ENCODE measurements at regions of chr1 and their contacts with region 1.

Region 1: GRCh38 chr1:228139944-228140656 is at the start of gene GUK1:
- DNase-seq: peak; percentile 100
- ATAC-seq: peak; percentile 95
- H3K4me3 Mint-ChIP-seq: peak within 1 kb of the TSS; percentile 99
- H3K27ac Mint-ChIP-seq: peak within 1 kb of the TSS; percentile 99
- H3K4me1 Mint-ChIP-seq: peaks cover 42% of the 10 kb centered on the region
- H3K27me3 Mint-ChIP-seq: no peaks in the 10 kb centered on the region
- CTCF ChIP-seq: no peak
- total RNA-seq, gene GUK1: 375 to 376 TPM

Region 2: DNA sequence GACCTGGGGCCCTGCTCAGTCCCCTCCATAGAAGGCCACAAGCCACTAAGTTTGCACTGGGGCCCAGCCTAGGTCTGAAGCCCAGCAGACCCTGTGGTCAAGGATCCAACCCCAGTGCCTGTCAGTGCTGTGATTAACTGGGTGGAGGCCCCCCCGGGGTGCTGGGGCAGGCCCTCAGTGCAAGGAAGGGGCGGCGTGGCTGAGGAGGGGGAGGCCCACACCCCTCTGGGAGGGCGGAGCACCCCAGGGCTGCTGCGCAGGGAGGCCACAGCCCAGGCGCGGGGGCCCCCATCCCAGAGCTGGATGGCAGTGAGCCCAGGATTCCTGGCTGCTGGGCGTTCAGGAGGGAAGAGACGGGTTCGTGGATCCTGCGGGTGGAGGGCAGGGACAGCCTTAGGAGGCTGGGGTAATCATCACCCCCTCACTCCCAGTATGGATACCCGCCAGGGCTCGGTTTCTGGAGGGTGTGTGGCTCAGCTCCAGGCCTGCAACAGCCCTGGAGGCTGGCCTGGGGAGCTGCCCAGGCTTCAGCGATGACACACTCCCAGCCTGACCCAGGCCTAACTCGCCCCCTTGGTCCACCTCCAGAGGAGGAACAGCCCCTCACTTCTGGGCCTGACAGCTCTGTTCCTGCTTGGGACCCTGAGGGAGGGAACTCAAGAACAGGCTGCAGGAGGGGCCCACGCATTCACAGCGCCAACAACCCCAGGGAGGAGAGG is 10.5 kb after region 1 on chr1:
- CTCF ChIA-PET with region 1: interaction called, 3 read pairs
- POLR2A ChIA-PET with region 1: interaction called, 16 read pairs
- intact Hi-C with region 1: no loop called
- DNase-seq: peak; percentile 2
- ATAC-seq: no peak
- H3K4me3 Mint-ChIP-seq: no peak overlapping the region
- H3K27ac Mint-ChIP-seq: no peak overlapping the region
- H3K4me1 Mint-ChIP-seq: peaks cover 19% of the 10 kb centered on the region
- H3K27me3 Mint-ChIP-seq: no peaks in the 10 kb centered on the region
- CTCF ChIP-seq: no peak

Region 3: DNA sequence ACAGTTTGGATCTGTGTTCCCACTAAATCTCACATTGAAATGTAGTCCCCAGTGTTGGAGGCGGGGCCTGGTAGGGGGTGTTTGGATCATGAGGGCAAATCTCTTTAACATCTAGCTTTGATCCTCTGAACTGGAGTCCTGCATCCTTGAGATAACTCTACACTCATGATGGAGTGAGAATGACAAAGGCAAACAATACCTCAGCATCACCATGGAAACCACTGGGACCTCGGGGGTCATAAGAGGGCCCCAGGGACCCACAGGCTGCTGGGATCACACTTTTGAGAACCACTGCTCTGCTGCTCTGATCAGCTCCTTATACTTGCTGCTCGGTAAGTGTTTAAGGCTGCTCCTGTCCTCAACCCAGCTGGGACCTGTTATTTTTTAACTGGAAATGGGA is 54.3 kb after region 1 on chr1:
- CTCF ChIA-PET with region 1: no interaction called
- POLR2A ChIA-PET with region 1: no interaction called
- intact Hi-C with region 1: no loop called
- DNase-seq: no peak
- ATAC-seq: no peak
- H3K4me3 Mint-ChIP-seq: no peak overlapping the region
- H3K27ac Mint-ChIP-seq: no peak overlapping the region
- H3K4me1 Mint-ChIP-seq: no peaks in the 10 kb centered on the region
- H3K27me3 Mint-ChIP-seq: no peaks in the 10 kb centered on the region
- CTCF ChIP-seq: no peak

Region 4: DNA sequence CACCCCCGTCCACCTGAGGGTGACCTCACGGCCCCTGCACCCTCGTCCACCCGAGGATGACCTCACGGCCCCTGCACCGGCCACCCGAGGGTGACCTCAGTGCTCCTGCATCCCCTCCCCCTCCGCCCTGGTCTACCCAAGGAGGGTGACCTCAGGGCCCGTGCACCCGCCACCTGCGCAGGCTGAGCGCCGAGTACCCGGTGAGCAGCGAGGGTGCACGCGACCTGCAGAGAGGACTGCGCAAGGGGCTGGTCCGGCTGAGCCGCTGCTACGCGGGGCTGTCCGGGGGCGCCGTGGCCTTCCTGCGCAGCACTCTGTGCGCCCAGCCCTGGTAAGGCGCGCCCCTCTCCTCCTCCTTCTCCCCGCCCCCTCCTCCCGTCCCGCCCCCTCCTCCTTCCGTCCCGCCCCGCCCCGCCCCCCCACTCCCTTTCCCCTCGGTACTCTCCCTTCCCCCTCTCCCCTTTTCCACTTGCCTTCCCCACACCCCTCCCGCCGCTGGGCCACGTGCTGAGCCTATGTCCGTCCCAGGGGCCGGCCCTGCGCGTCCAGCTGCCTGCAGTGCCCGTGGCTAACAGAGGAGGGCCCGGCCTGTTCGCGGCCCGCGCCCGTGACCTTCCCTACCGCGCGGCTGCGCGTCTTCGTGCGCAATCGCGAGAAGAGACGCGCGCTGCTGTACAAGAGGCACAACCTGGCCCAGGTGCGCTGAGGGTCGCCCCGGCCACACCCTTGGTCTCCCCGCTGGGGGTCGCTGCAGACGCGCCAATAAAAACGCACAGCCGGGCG is 238.2 kb after region 1 on chr1:
- CTCF ChIA-PET with region 1: no interaction called
- POLR2A ChIA-PET with region 1: no interaction called
- intact Hi-C with region 1: no loop called
- DNase-seq: peak; percentile 82
- ATAC-seq: peak; percentile 85
- H3K4me3 Mint-ChIP-seq: peak overlapping the region; percentile 76
- H3K27ac Mint-ChIP-seq: no peak overlapping the region
- H3K4me1 Mint-ChIP-seq: peaks cover 7% of the 10 kb centered on the region
- H3K27me3 Mint-ChIP-seq: peaks cover 20% of the 10 kb centered on the region
- CTCF ChIP-seq: peak; percentile 79